Prostate gland (tissue), 2 donors: ENCODE measurements at regions of chr18 and their contacts with region 1.

Region 1: DNA sequence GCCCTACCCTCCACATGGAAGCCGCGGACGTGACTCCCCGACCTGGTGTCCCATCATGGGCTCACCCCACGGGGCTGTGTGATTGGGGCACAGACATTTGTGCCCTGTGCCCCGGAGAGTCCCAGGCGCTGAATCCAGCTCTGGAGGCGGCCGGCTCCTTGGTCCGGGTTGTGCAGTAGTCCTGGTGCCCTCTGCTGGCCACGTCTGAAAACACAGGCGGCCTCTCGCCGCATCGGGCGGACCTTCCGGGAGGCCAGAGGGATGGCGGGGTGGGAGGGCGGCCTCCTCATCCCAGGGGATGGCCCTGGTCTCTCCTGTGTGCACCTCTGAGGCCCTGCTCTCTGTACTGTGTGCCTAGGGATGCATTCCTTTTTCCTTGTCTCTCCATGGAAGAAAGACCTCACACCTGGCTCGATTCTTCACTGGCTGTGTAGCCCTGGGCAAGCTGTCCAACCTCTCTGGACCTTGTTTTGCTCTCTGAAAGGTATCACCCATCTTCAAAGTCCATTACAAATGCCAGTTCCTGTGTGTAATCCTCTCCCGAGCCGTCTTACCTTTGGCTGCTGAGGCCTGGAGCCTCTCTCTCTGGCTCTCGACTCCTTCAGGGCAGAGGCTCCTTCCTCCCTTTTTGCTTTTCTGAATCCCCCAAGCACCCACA is 27.6 kb downstream of the CELF4 start:
- DNase-seq: peak; percentile 68
- H3K4me3 ChIP-seq: no peak overlapping the region
- H3K27ac ChIP-seq: no peak overlapping the region
- H3K4me1 ChIP-seq: no peaks in the 10 kb centered on the region
- H3K27me3 ChIP-seq: peaks cover 3% of the 10 kb centered on the region
- CTCF ChIP-seq: peak; percentile 68 to 82 (median 70)
- POLR2A ChIP-seq: no peak

Region 2: GRCh38 chr18:37341016-37341415 is 197.0 kb before region 1 on chr18:
- intact Hi-C with region 1: loop called (anchors 5 kb)
- DNase-seq: no peak
- H3K4me3 ChIP-seq: no peak overlapping the region
- H3K27ac ChIP-seq: no peak overlapping the region
- H3K4me1 ChIP-seq: no peaks in the 10 kb centered on the region
- H3K27me3 ChIP-seq: no peaks in the 10 kb centered on the region
- CTCF ChIP-seq: no peak
- POLR2A ChIP-seq: no peak

Region 3: GRCh38 chr18:37385846-37386778 is 151.9 kb before region 1 on chr18:
- intact Hi-C with region 1: loop called (anchors 5 kb)
- DNase-seq: no peak
- H3K4me3 ChIP-seq: no peak overlapping the region
- H3K27ac ChIP-seq: no peak overlapping the region
- H3K4me1 ChIP-seq: no peaks in the 10 kb centered on the region
- H3K27me3 ChIP-seq: no peaks in the 10 kb centered on the region
- CTCF ChIP-seq: peak; percentile 46 to 81 (median 60)
- POLR2A ChIP-seq: no peak

Region 4: DNA sequence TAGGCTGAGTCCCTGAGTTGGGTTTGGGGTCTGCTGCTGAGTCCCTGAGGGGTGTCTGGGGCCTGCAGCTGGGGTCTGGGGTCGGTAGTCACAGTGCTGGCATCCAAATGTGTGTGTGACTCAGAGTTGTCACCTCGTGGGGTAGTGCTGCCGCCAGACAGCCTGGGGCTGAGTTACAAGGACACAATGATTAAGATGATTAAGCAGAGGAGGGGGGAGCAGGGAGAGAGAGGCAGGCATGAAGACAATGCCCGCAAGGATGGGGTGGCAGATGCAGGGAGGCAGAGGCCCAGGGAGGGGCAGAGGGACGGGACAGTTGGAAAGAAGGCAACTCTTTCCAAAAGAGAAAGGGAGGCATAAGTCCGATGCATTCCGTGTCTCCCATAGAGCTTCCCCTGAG is 92.6 kb before region 1 on chr18:
- intact Hi-C with region 1: loop called (anchors 10 kb)
- DNase-seq: no peak
- H3K4me3 ChIP-seq: no peak overlapping the region
- H3K27ac ChIP-seq: no peak overlapping the region
- H3K4me1 ChIP-seq: no peaks in the 10 kb centered on the region
- H3K27me3 ChIP-seq: no peaks in the 10 kb centered on the region
- CTCF ChIP-seq: no peak
- POLR2A ChIP-seq: no peak